ENCODE measurements at regions of chr11 and their contacts with region 1.

Region 1: DNA sequence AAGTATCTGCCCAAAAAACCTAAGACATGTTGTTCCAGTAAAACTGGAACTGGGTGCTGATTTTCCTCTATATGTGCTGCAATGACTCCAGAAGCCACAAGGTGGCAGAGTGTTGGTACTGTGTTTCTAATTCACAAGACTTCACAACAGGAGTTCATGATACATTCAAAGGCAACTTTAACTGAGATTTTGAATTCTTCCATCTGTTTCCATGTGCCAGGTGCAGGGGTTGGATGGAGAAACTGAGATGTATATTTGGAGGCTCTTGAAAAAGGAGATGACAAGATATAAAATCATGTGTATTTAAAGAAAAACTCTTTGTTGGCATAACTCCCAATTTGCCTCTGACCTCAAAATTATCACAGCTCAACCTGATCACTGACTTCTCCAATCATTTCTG is 1098.6 kb upstream of the CCDC90B start:
- DNase-seq: peak in 6 of 10 donors; percentile 33 to 69 (median 58)

Region 2: GRCh38 chr11:83836883-83837654 is 547.7 kb before region 1 on chr11:
- intact Hi-C with region 1: loop called (anchors 5 kb)
- DNase-seq: peak in 8 of 10 donors; percentile 29 to 92 (median 55)

Region 3: DNA sequence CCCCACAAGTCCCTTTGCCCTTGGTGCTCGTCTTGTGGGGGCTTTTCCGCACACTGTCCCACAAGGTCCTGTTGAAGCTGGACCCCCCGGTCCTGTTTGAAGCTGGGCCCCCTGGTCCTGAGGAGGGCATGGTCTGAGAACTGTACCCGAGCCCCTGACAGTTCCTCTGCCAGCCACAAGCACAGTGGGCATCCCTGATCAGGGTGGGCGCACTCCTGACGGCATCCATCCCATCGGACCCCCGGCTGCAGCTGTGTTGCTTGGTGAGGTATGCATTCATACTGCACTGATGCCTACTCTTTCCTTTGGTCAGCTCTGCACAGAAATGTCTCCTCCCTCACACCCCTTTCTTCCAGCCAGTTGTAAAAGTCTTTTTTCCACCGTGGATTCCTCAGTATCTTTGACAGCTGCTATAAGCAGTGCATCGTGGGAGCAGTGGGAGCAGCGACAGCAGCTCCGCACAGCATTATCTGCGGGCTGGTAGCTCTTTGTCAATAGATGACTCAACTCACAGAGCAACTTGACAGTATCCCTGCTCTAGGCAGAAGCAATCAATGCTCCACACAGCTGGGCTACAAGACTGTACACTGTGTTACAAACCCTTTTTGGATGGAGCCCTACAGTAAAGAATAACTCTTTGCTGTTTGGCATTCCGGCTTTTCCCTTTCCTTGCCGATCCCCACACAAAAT is 67.7 kb before region 1 on chr11:
- intact Hi-C with region 1: no loop called
- DNase-seq: peak; percentile 40 to 94 (median 66)

Measured in posterior cingulate gyrus (tissue), 11 donors.